ENCODE measurements at regions of chr10 and their contacts with region 1.

Region 1: DNA sequence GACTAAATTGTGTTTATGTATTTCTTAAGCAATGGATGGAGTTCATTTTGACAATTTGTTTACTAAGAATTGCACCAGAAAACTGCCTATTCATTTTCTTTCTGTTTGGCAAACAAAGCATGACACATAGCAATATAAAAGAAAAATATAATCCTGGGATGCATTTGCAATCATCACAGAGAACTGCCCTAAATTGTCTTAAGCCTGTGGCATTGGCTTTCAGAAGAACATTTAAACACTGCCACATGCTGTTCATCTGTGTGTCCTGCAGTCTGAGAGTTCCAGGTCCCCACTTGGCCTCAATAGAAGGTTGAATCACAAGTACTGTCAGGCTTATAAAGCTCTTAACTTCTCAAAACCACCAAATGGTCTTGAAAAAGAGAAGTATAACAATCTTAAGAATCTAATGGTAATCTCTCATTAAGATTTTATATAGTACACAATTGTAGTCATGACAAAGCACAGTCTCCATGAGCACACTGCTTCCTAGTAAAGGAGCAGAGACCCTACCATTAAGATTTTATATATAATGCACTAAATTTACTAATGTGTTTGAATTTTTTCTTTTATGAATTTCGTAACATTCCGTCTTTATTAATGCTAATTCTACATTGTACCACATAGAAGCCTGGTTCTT is 29.9 kb downstream of the RNLS start:
- DNase-seq: peak; percentile 25
- ATAC-seq: peak; percentile 92 to 94

Region 2: DNA sequence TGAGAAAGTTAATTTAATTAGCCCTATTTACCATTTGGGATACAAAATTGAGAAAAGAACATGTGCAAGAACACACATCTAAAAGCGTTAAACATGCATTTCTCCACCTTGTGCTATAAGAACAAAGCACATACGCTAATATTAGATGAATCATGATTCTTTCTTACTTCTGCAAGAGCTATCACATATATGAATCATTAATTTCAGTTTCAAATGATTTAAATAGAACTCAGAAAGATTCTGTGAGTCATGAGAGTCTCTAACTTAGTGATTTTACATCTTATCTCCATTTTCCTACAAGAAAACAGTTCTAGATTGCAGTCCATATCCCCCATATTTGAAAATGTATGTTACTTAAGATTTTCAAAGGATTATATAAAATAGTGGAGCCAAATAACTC is 144.0 kb before region 1 on chr10:
- intact Hi-C with region 1: loop called in 1 of 2 experiments (anchors 5 kb)
- DNase-seq: no peak
- ATAC-seq: no peak

Measured in left cardiac atrium (tissue), 4 donors.